GM13977 (cell line): ENCODE measurements at regions of chr15 and their contacts with region 1.

Region 1: GRCh38 chr15:100918034-100918689 is 995 bp upstream of the LRRK1 start:
- DNase-seq: peak; percentile 93
- CTCF ChIP-seq: peak; percentile 99

Region 2: DNA sequence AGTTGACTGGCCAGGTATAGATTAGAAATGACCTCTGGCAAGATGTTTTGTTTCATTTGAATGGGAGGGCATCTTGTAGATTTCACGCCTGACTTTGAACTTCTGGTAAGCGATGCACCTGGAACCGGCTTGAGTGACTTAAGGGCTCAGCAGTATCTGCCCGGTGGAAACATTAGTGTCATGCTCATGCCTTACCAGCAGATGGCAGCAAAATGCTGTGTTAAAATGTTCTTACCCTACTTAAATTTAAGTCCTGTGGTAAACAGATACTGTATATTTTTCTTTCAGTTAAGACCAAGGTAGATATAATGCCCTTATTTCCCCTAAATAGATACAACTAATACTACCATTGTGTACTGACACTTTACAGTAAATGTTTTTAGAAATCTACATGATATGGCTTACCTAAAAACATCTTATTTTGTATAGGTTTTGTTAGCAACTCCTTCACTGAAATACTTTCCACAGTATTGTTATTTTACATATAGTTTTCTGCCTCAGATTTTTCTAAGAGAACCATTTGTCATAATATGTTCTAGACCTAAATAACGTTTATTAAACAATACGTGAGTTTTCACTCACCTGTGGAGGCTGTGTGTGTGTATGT is 290.3 kb before region 1 on chr15:
- in situ Hi-C with region 1: loop called (anchors 25 kb)
- DNase-seq: peak; percentile 66
- CTCF ChIP-seq: peak; percentile 77

Region 3: DNA sequence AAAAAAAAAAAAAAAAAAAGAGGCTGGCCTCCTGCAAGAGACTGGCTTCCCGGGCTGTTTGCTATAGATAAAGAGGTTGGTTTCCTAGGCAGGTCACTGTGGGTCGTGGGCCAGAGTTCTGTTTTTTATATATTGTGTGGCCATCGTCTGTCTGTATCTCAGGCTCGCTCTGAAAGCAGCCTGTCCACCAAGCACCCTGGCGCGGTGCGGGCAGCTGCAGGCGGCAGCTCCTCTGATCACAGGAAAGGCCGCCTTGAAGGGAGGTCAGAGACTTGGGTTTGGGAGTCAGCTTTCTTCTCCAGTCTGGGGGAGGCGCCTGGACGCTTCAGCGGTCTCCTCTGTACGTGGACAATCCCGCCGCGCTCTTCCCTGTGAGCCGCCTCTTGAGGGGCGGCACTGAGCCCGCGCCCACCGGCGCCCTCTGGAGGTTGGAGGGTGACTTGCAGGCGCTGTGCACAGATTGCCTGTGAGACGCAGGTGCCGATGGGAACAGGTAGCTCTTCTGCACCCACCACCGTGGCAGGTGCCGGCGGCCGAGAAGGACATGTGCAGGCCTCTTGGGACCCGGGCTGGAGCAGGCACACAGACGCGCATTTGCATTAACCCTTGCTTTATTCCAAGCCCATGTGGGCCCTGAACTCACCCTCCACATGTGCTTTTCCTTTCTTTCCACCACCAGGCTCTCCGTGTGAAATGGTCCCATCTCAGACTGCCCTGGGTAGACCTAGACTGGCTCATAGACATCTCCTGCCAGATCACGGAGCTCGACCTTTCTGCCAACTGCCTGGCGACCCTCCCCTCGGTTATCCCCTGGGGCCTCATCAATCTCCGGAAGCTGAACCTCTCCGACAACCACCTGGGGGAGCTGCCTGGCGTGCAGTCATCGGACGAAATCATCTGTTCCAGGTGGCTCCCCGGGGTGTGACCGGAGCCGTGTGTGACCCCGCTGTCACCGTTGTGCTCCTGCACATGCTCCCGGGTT is 90.3 kb after region 1 on chr15:
- in situ Hi-C with region 1: loop called (anchors 10 kb)
- DNase-seq: peak; percentile 90
- CTCF ChIP-seq: peak; percentile 99

Region 4: GRCh38 chr15:101251830-101252820 is 334.0 kb after region 1 on chr15 and contains the start of gene CHSY1:
- in situ Hi-C with region 1: loop called (anchors 25 kb)
- DNase-seq: peak; percentile 94
- CTCF ChIP-seq: peak; percentile 57